CD8-positive, alpha-beta T cell (primary cell): ENCODE measurements at regions of chr2 and their contacts with region 1.

Region 1: DNA sequence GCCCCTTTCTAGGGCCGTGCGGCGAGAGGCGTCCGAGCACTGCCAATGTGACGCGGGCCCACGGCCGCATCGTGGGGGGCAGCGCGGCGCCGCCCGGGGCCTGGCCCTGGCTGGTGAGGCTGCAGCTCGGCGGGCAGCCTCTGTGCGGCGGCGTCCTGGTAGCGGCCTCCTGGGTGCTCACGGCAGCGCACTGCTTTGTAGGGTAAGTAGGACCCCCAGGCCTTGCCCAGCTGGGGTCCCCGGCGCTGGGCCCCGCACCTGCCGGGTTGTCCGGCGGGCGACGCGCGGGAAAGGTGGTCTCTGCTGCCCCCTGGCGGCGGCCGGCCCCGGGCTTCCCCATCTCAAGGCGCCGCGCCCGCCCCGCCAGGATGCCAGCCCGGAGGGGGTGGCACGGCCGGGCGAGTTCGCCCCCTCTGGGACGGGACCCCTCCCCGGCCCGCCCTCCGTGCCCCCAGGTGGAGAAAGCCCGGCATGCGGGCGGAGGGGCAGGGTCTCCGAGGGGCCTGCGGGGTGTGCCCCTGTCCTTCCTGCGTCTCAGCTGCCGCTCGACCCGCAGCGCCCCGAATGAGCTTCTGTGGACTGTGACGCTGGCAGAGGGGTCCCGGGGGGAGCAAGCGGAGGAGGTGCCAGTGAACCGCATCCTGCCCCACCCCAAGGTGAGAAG is 1.9 kb downstream of the PRSS56 start:
- DNase-seq: peak; percentile 42 to 84 (median 64)
- ATAC-seq: peak; percentile 72
- H3K4me3 ChIP-seq: peak overlapping the region; percentile 23 to 49
- H3K4me3 Mint-ChIP-seq: no peak overlapping the region
- H3K27ac ChIP-seq: no peak overlapping the region
- H3K27ac Mint-ChIP-seq: no peak overlapping the region
- H3K4me1 ChIP-seq: peaks cover 18% of the 10 kb centered on the region
- H3K4me1 Mint-ChIP-seq: peaks cover 9% of the 10 kb centered on the region
- H3K27me3 ChIP-seq: peaks cover 25 to 33% of the 10 kb centered on the region in 2 experiments
- H3K27me3 Mint-ChIP-seq: peaks cover 47% of the 10 kb centered on the region
- CTCF ChIP-seq: peak; percentile 91

Region 2: DNA sequence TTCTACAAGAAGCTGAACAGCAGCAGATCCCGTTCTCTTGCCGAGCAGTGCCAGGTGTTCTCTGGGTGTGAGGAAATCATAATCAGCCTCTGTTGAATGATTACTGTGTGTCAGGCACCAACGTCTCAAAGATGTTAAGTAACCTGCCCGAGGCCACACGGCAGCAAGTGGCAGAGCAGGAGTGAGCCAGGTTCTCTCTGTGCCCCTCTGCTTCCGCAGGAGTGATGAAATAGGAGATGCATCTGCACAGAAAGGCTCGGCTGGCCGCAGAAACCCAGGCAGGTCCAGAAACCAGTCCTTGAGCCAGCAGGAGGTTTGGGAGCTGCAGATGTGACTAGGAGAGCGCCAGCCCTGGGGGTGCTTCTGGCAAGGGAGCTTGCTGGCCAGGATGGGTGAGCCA is 667.4 kb before region 1 on chr2:
- CTCF ChIA-PET with region 1: no interaction called
- POLR2A ChIA-PET with region 1: no interaction called
- intact Hi-C with region 1: loop called in 1 of 2 experiments (anchors 5 kb)
- DNase-seq: no peak
- ATAC-seq: no peak
- H3K4me3 ChIP-seq: no peak overlapping the region
- H3K4me3 Mint-ChIP-seq: no peak overlapping the region
- H3K27ac ChIP-seq: no peak overlapping the region
- H3K27ac Mint-ChIP-seq: no peak overlapping the region
- H3K4me1 ChIP-seq: no peaks in the 10 kb centered on the region
- H3K4me1 Mint-ChIP-seq: peaks cover 4% of the 10 kb centered on the region
- H3K27me3 ChIP-seq: no peaks in the 10 kb centered on the region
- H3K27me3 Mint-ChIP-seq: peaks cover 15% of the 10 kb centered on the region
- CTCF ChIP-seq: no peak

Region 3: DNA sequence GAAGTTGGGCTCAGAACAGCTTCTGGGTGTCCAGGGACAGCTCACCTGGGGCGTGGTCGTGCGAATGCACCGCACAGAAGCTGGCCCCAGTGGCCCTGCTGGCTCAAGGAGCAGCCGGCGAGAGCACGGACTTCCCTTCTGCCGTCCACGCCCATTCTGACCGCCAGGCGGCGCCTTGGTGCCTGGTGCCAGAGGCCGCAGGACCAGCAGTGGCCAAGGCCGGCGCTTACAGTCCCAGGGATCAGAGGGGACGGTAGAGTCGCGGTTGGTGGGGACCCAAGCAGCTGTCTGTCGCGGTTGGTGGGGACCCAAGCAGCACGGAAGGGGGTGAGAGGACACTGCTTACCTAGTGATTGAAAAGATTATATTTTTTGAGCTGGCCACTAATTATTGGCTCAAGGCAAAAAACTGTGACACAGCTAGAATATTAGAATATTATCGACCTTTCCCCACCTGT is 621.6 kb before region 1 on chr2:
- CTCF ChIA-PET with region 1: no interaction called
- POLR2A ChIA-PET with region 1: no interaction called
- intact Hi-C with region 1: loop called in 1 of 2 experiments (anchors 5 kb)
- DNase-seq: peak; percentile 19 to 60 (median 41)
- ATAC-seq: peak; percentile 26
- H3K4me3 ChIP-seq: no peak overlapping the region
- H3K4me3 Mint-ChIP-seq: no peak overlapping the region
- H3K27ac ChIP-seq: no peak overlapping the region
- H3K27ac Mint-ChIP-seq: no peak overlapping the region
- H3K4me1 ChIP-seq: no peaks in the 10 kb centered on the region
- H3K4me1 Mint-ChIP-seq: no peaks in the 10 kb centered on the region
- H3K27me3 ChIP-seq: no peaks in the 10 kb centered on the region
- H3K27me3 Mint-ChIP-seq: no peaks in the 10 kb centered on the region
- CTCF ChIP-seq: peak; percentile 75

Region 4: GRCh38 chr2:231907787-231908186 is 614.3 kb before region 1 on chr2:
- CTCF ChIA-PET with region 1: no interaction called
- POLR2A ChIA-PET with region 1: no interaction called
- intact Hi-C with region 1: loop called (anchors 2 to 5 kb)
- DNase-seq: no peak
- ATAC-seq: no peak
- H3K4me3 ChIP-seq: no peak overlapping the region
- H3K4me3 Mint-ChIP-seq: no peak overlapping the region
- H3K27ac ChIP-seq: no peak overlapping the region
- H3K27ac Mint-ChIP-seq: no peak overlapping the region
- H3K4me1 ChIP-seq: peaks cover 11% of the 10 kb centered on the region
- H3K4me1 Mint-ChIP-seq: peaks cover 8% of the 10 kb centered on the region
- H3K27me3 ChIP-seq: no peaks in the 10 kb centered on the region
- H3K27me3 Mint-ChIP-seq: no peaks in the 10 kb centered on the region
- CTCF ChIP-seq: no peak

Region 5: DNA sequence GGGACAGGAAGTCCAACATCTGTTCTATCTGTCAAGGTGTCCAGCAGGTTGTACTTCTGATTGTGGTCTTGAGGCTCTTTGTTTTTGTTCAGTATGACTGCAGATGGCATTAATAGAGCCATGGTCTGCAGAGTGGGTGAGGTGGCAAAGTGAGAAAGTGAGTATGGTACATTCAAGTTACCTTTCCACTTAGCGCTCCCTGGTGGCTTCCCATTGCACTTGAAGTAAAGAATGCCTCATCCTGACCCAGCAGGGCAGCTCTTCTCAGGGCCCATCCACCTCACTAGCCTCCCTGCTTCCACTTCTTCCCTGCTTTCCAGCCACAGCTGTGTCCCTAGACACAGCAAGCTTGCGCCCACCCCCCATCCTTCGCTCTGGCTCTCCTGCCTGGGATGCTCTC is 291.5 kb before region 1 on chr2:
- CTCF ChIA-PET with region 1: no interaction called
- POLR2A ChIA-PET with region 1: no interaction called
- intact Hi-C with region 1: no loop called
- DNase-seq: peak in 1 of 9 experiments; percentile 8
- ATAC-seq: no peak
- H3K4me3 ChIP-seq: no peak overlapping the region
- H3K4me3 Mint-ChIP-seq: no peak overlapping the region
- H3K27ac ChIP-seq: no peak overlapping the region
- H3K27ac Mint-ChIP-seq: no peak overlapping the region
- H3K4me1 ChIP-seq: no peaks in the 10 kb centered on the region
- H3K4me1 Mint-ChIP-seq: peaks cover 11% of the 10 kb centered on the region
- H3K27me3 ChIP-seq: no peaks in the 10 kb centered on the region
- H3K27me3 Mint-ChIP-seq: no peaks in the 10 kb centered on the region
- CTCF ChIP-seq: no peak

Region 6: DNA sequence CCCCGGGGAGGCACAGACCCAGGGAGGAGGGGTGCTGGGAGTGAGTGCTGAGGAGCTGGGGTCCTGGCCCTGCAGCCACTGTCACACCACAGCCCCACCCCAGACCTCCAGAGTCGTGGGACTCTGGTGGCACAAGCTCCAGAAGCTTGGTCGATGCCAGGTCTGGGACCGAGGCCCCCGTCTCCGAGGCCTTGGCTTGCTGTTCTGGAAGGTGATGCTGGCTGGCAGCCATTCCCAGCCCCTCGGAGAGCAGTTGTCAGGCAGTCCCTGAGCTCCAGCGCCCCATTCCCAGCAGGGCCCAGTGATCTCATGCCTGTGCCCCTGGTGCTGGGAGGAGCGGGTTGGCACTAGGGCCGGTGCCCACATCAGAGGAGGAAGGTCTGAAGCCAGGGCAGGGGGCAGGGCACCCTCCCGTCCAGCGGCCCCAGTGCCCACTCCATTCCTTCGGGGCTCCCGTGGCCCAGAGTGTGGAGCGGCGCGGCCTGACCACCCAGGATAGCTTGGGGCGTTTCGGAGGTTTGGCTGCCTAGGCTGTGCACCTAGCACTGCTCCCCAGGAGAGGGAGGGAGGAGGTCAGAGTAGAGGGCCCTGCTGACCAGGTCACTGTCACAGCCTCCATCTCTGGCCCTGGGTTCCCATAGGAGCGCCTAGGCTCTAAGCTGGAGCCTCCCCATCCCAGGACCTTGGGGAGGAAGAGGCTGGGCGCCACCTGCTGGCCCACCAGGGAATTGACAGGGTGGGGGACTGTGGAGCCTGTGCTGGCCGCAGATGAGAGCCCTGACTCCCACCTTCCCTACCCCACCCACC is 82.9 kb before region 1 on chr2:
- CTCF ChIA-PET with region 1: interaction called, 4 read pairs
- POLR2A ChIA-PET with region 1: no interaction called
- intact Hi-C with region 1: loop called (anchors 1 kb)
- DNase-seq: peak in 6 of 9 experiments; percentile 22 to 62 (median 47)
- ATAC-seq: peak; percentile 45
- H3K4me3 ChIP-seq: no peak overlapping the region
- H3K4me3 Mint-ChIP-seq: no peak overlapping the region
- H3K27ac ChIP-seq: no peak overlapping the region
- H3K27ac Mint-ChIP-seq: no peak overlapping the region
- H3K4me1 ChIP-seq: no peaks in the 10 kb centered on the region
- H3K4me1 Mint-ChIP-seq: peaks cover 5% of the 10 kb centered on the region
- H3K27me3 ChIP-seq: no peaks in the 10 kb centered on the region
- H3K27me3 Mint-ChIP-seq: no peaks in the 10 kb centered on the region
- CTCF ChIP-seq: no peak

Region 7: GRCh38 chr2:232444409-232445148 is 77.5 kb before region 1 on chr2:
- CTCF ChIA-PET with region 1: interaction called, 7 read pairs
- POLR2A ChIA-PET with region 1: no interaction called
- intact Hi-C with region 1: loop called (anchors 1 kb)
- DNase-seq: peak in 8 of 9 experiments; percentile 34 to 70 (median 56)
- ATAC-seq: peak; percentile 29
- H3K4me3 ChIP-seq: no peak overlapping the region
- H3K4me3 Mint-ChIP-seq: no peak overlapping the region
- H3K27ac ChIP-seq: no peak overlapping the region
- H3K27ac Mint-ChIP-seq: no peak overlapping the region
- H3K4me1 ChIP-seq: no peaks in the 10 kb centered on the region
- H3K4me1 Mint-ChIP-seq: peaks cover 12% of the 10 kb centered on the region
- H3K27me3 ChIP-seq: no peaks in the 10 kb centered on the region
- H3K27me3 Mint-ChIP-seq: no peaks in the 10 kb centered on the region
- CTCF ChIP-seq: peak; percentile 57

Region 8: GRCh38 chr2:232550354-232551249 is 28.5 kb after region 1 on chr2 and contains the starts of genes EIF4E2 and TIGD1:
- CTCF ChIA-PET with region 1: no interaction called
- POLR2A ChIA-PET with region 1: interaction called, 6 read pairs
- intact Hi-C with region 1: loop called in 1 of 2 experiments (anchors 2 kb)
- DNase-seq: peak; percentile 78 to 94 (median 91)
- ATAC-seq: peak; percentile 82
- H3K4me3 ChIP-seq: peak within 1 kb of the TSS; percentile 74 to 91
- H3K4me3 Mint-ChIP-seq: peak within 1 kb of the TSS; percentile 100
- H3K27ac ChIP-seq: peak within 1 kb of the TSS; percentile 86 to 88
- H3K27ac Mint-ChIP-seq: peak within 1 kb of the TSS; percentile 100
- H3K4me1 ChIP-seq: peaks cover 28% of the 10 kb centered on the region
- H3K4me1 Mint-ChIP-seq: peaks cover 80% of the 10 kb centered on the region
- H3K27me3 ChIP-seq: no peaks in the 10 kb centered on the region
- H3K27me3 Mint-ChIP-seq: no peaks in the 10 kb centered on the region
- CTCF ChIP-seq: peak; percentile 55
- total RNA-seq, gene EIF4E2: 53.8 to 55.2 TPM
- total RNA-seq, gene TIGD1: 16.5 to 17.2 TPM

Region 9: GRCh38 chr2:232632908-232633732 is 111.0 kb after region 1 on chr2 and contains the start of gene EFHD1:
- CTCF ChIA-PET with region 1: no interaction called
- POLR2A ChIA-PET with region 1: no interaction called
- intact Hi-C with region 1: no loop called
- DNase-seq: peak in 8 of 9 experiments; percentile 12 to 67 (median 48)
- ATAC-seq: peak; percentile 69
- H3K4me3 ChIP-seq: peak within 1 kb of the TSS; percentile 38 to 55
- H3K4me3 Mint-ChIP-seq: peak within 1 kb of the TSS; percentile 58
- H3K27ac ChIP-seq: no peak within 1 kb of the TSS
- H3K27ac Mint-ChIP-seq: no peak within 1 kb of the TSS
- H3K4me1 ChIP-seq: peaks cover 11% of the 10 kb centered on the region
- H3K4me1 Mint-ChIP-seq: peaks cover 10% of the 10 kb centered on the region
- H3K27me3 ChIP-seq: peaks cover 13 to 39% of the 10 kb centered on the region in 2 experiments
- H3K27me3 Mint-ChIP-seq: peaks cover 37% of the 10 kb centered on the region
- CTCF ChIP-seq: no peak
- total RNA-seq, gene EFHD1: 0.92 to 1.1 TPM

Region 10: GRCh38 chr2:232802091-232802490 is 280.0 kb after region 1 on chr2:
- CTCF ChIA-PET with region 1: no interaction called
- POLR2A ChIA-PET with region 1: no interaction called
- intact Hi-C with region 1: no loop called
- DNase-seq: no peak
- ATAC-seq: no peak
- H3K4me3 ChIP-seq: no peak overlapping the region
- H3K4me3 Mint-ChIP-seq: no peak overlapping the region
- H3K27ac ChIP-seq: no peak overlapping the region
- H3K27ac Mint-ChIP-seq: no peak overlapping the region
- H3K4me1 ChIP-seq: no peaks in the 10 kb centered on the region
- H3K4me1 Mint-ChIP-seq: no peaks in the 10 kb centered on the region
- H3K27me3 ChIP-seq: no peaks in the 10 kb centered on the region
- H3K27me3 Mint-ChIP-seq: no peaks in the 10 kb centered on the region
- CTCF ChIP-seq: no peak